Esophagus muscularis mucosa (tissue), 4 donors: ENCODE measurements at regions of chr4 and their contacts with region 1.

Region 1: DNA sequence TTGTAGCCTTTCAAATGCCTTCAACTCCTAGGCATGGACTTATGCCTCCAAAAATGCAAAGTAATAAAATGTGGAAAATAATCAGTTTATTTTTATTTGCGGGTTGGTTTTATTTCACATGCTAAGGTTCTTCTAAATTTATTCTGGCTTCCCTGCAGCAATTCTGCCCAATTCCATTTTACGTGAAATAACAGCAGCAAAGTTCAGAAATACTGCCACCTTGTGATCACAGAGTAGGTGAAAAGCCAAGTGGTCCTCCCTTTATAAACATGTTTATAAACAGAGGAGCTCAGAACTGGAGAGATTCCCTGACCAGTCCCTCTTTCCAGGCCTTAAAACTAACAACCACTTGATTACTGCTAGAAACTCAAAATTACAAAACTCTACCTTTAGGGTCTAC is 14.7 kb upstream of the DCHS2 start:
- DNase-seq: peak; percentile 80
- H3K4me3 ChIP-seq: no peak overlapping the region
- H3K27ac ChIP-seq: no peak overlapping the region
- H3K4me1 ChIP-seq: no peaks in the 10 kb centered on the region
- H3K27me3 ChIP-seq: peaks cover 0 to 12% (median 0%) of the 10 kb centered on the region in 4 donors
- CTCF ChIP-seq: peak; percentile 34 to 51 (median 42)
- EP300 ChIP-seq: no peak
- POLR2A ChIP-seq: no peak

Region 2: GRCh38 chr4:154329268-154329868 is 176.9 kb before region 1 on chr4:
- intact Hi-C with region 1: loop called (anchors 5 kb)
- DNase-seq: no peak
- H3K4me3 ChIP-seq: no peak overlapping the region
- H3K27ac ChIP-seq: peak overlapping the region in 2 of 4 donors; percentile 20 to 55
- H3K4me1 ChIP-seq: peaks cover 0 to 15% (median 13%) of the 10 kb centered on the region in 4 donors
- H3K27me3 ChIP-seq: peaks cover 0 to 26% (median 7%) of the 10 kb centered on the region in 4 donors
- CTCF ChIP-seq: peak; percentile 25 to 46 (median 34)
- EP300 ChIP-seq: no peak
- POLR2A ChIP-seq: no peak